ENCODE measurements at regions of chr17 and their contacts with region 1.

Region 1: DNA sequence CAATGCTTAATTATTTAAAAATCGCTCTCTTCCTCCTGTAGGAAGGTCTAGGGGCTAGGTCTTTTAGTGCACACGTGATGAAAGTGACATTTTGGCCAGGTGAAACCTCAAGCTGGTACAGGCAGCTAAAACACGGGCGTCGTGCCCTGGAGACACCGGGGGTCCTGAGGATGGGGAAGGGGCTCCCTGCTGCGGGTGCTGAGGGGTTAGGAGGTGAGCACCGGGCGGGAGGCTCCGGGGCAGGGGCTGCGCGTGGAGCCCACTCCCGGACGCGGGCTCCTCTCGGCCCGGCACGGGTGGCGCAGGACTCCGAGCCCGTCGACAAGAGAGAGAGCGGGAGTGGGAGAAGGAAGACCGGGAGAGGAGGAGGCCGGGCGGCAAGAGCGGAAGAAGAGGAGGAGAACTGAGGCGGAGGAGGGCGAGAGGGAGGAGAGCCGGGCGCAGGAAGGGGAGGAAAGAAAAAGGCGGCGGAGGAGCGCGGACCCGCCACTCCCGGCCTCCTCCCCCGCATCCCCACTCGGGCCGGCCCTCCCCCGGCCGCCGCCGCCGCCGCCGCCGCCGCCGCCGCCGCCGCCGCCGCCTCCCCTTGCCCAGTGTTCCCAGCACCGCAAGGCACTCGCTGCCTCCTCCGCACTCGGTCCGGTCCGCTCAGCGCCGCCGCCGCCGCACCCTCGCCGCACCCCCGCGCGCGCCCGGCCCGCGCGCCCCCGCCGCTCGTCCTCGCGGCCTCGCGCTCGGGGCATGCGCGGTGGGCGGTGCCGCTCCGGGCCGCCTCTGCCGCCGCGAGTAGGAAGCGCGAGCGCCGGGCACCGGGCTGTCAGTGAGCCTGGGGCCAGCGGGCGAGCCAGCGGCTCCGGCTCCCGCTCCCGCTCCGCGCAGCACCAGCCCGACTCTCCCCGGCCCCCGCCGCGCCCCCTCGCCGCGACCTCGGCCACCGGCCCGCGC is at the start of gene PRKCA:
- DNase-seq: peak; percentile 26 to 88 (median 76)

Region 2: GRCh38 chr17:66214884-66215528 is 87.1 kb before region 1 on chr17:
- intact Hi-C with region 1: no loop called
- DNase-seq: no peak

Region 3: GRCh38 chr17:66466840-66467367 is 164.8 kb after region 1 on chr17:
- intact Hi-C with region 1: no loop called
- DNase-seq: no peak

Region 4: GRCh38 chr17:66541461-66542128 is 239.5 kb after region 1 on chr17:
- intact Hi-C with region 1: loop called (anchors 2 kb)
- DNase-seq: peak in 31 of 42 donors; percentile 11 to 70 (median 46)